AG04450 (cell line): ENCODE measurements at regions of chr3 and their contacts with region 1.

Region 1: GRCh38 chr3:113575206-113575605 is 42.9 kb downstream of the SIDT1 start:
- DNase-seq: no peak
- H3K4me3 ChIP-seq: no peak overlapping the region
- H3K27ac ChIP-seq: no peak overlapping the region
- H3K27me3 ChIP-seq: peaks cover 13% of the 10 kb centered on the region
- CTCF ChIP-seq: no peak

Region 2: GRCh38 chr3:113151461-113152031 is 423.7 kb before region 1 on chr3:
- CTCF ChIA-PET with region 1: no interaction called
- POLR2A ChIA-PET with region 1: no interaction called
- DNase-seq: no peak
- H3K4me3 ChIP-seq: no peak overlapping the region
- H3K27ac ChIP-seq: no peak overlapping the region
- H3K27me3 ChIP-seq: peaks cover 10% of the 10 kb centered on the region
- CTCF ChIP-seq: no peak

Region 3: DNA sequence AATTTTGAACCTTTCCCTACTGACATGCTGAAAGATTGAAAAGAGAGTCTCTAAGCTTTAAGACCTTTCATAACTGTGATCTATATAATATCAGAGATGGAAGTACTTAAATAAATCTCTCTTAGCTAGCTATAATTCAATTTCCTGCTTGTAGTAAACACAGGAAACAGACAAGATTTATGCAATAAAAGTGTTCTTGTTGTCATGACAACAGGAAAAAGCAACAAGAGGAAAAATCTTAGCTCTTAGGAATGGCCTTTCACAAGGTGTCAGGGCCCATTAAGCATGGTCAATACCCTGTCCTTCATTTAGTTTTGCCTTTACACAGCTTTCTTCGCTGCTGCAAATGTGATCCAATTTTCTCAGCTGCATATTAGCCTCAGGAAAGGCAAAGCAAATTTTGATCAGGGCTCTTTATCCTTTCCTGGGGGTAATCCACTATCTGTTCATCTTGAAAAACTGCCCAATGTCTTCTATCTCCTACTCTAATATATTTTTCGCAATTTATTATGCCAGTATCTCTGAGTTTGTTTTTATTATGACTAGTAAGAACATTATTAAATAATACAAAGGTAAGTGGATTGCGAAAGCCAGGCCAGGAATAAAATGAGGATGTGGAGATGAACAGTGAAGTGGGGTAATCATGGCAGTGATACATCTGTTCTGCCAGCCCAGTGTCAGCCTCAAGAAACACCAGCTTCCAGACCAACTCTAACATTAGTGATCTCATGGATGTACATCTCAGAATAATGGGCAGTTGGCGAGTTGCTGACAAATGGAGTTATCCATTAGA is 14.2 kb before region 1 on chr3:
- CTCF ChIA-PET with region 1: interaction called, 11 read pairs
- POLR2A ChIA-PET with region 1: no interaction called
- DNase-seq: no peak
- H3K4me3 ChIP-seq: no peak overlapping the region
- H3K27ac ChIP-seq: no peak overlapping the region
- H3K27me3 ChIP-seq: peaks cover 4% of the 10 kb centered on the region
- CTCF ChIP-seq: no peak

Region 4: DNA sequence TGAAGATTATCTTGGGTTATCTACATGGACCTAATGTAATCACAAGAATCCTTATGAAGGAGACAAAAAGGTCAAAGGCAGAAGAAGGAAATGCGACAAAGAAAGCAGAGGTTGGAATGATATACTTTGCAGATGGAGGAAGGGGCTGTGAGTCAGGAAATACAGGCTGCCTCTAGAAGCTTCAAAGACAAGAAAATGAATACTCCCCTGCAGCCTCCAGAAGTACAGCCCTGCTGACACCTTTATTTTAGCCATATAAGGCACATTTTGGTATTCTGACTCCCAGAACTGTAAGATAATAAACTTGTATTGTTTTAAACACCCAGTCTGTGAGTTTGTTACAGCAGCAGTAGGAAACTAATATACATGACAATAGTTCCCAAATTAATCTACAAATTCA is 15.8 kb after region 1 on chr3:
- CTCF ChIA-PET with region 1: interaction called, 20 read pairs
- POLR2A ChIA-PET with region 1: no interaction called
- DNase-seq: no peak
- H3K4me3 ChIP-seq: no peak overlapping the region
- H3K27ac ChIP-seq: no peak overlapping the region
- H3K27me3 ChIP-seq: no peaks in the 10 kb centered on the region
- CTCF ChIP-seq: no peak

Region 5: DNA sequence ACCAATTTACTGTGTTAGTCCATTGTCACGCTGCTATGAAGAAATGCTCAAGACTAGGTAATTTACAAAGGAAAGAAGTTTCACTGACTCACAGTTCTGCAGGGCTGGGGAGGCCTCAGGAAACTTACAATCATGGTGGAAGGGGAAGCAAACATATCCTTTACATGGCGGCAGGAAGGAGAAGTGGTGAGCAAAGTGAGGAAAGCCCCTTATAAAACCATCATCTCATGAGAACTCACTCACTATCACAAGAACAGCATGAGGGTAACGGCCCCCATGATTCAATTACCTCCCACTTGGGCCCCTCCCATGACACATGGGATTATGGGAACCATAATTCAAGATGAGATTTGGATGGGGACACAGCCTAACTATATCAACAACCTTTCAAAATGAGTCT is 101.1 kb after region 1 on chr3:
- CTCF ChIA-PET with region 1: no interaction called
- POLR2A ChIA-PET with region 1: no interaction called
- DNase-seq: no peak
- H3K4me3 ChIP-seq: no peak overlapping the region
- H3K27ac ChIP-seq: no peak overlapping the region
- H3K27me3 ChIP-seq: no peaks in the 10 kb centered on the region
- CTCF ChIP-seq: no peak